Activated CD8-positive, alpha-beta T cell treated with anti-CD3 and anti-CD28 coated beads for 36 hours (primary cell): ENCODE measurements at regions of chr2 and their contacts with region 1.

Region 1: GRCh38 chr2:209577376-209578357 is 153.8 kb downstream of the MAP2 start:
- DNase-seq: no peak
- ATAC-seq: no peak
- H3K4me3 Mint-ChIP-seq: no peak overlapping the region
- H3K27ac Mint-ChIP-seq: no peak overlapping the region
- H3K4me1 Mint-ChIP-seq: no peaks in the 10 kb centered on the region
- H3K27me3 Mint-ChIP-seq: peaks cover 1% of the 10 kb centered on the region
- CTCF ChIP-seq: peak; percentile 46

Region 2: GRCh38 chr2:209960676-209961630 is 383.3 kb after region 1 on chr2:
- CTCF ChIA-PET with region 1: interaction called, 10 read pairs
- POLR2A ChIA-PET with region 1: no interaction called
- intact Hi-C with region 1: no loop called
- DNase-seq: peak; percentile 67
- ATAC-seq: peak; percentile 89
- H3K4me3 Mint-ChIP-seq: no peak overlapping the region
- H3K27ac Mint-ChIP-seq: no peak overlapping the region
- H3K4me1 Mint-ChIP-seq: no peaks in the 10 kb centered on the region
- H3K27me3 Mint-ChIP-seq: peaks cover 1% of the 10 kb centered on the region
- CTCF ChIP-seq: peak; percentile 79